CD8-positive, alpha-beta memory T cell (primary cell): ENCODE measurements at regions of chr16 and their contacts with region 1.

Region 1: DNA sequence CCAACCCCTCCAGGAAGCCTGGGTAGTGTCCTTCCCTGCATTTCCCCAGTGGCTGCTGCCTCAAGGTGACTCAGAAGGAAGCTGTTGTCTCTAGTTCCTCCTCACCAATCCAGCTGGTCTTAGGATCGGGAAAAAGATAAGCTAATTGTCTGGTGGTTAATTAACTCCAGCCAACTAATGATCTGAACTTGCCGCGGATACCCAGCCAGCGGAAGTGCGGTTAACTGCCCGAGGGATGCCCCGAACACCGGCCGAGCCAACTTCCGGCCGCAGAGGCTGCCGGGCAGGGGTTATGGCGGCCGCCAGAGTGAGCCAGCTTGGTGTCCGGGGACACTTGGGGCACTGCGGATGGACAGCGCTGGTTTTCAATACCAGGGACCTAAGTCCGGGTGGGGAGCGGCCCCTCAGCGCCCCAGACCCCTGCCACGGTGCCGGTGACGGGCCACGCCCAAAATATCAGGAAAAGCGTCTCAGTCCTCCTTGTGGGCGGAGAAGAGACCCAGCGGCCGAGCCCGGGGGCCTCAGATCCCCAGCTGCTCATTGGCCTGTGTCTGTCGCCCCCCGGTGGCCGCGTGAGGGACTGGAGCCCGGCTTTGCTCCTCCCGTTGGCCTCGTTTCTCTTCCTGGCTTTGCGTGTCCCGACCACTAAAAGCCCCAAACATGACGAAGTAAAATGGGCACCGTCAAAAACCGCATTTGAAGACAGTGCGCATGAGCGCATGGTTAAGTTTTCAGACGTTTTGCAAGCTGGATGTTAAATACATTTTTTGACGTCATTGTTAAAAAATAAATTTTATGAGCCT is 10.2 kb upstream of the PRSS22 start:
- DNase-seq: peak; percentile 93 to 96 (median 94)
- H3K4me3 ChIP-seq: peak overlapping the region; percentile 73
- H3K4me3 Mint-ChIP-seq: peak overlapping the region; percentile 73 to 93 (median 87)
- H3K27ac ChIP-seq: peak overlapping the region; percentile 79
- H3K27ac Mint-ChIP-seq: peak overlapping the region; percentile 75 to 96 (median 86)
- H3K4me1 ChIP-seq: peaks cover 13% of the 10 kb centered on the region
- H3K4me1 Mint-ChIP-seq: peaks cover 17 to 23% (median 20%) of the 10 kb centered on the region in 3 donors
- H3K27me3 ChIP-seq: no peaks in the 10 kb centered on the region
- H3K27me3 Mint-ChIP-seq: no peaks in the 10 kb centered on the region

Region 2: GRCh38 chr16:2728034-2728433 is 140.2 kb before region 1 on chr16:
- CTCF ChIA-PET with region 1: no interaction called
- POLR2A ChIA-PET with region 1: no interaction called
- DNase-seq: no peak
- H3K4me3 ChIP-seq: no peak overlapping the region
- H3K4me3 Mint-ChIP-seq: no peak overlapping the region
- H3K27ac ChIP-seq: no peak overlapping the region
- H3K27ac Mint-ChIP-seq: peak overlapping the region in 1 of 8 donors; percentile 65
- H3K4me1 ChIP-seq: no peaks in the 10 kb centered on the region
- H3K4me1 Mint-ChIP-seq: no peaks in the 10 kb centered on the region
- H3K27me3 ChIP-seq: no peaks in the 10 kb centered on the region
- H3K27me3 Mint-ChIP-seq: peaks cover 2 to 13% of the 10 kb centered on the region in 2 donors

Region 3: GRCh38 chr16:2838928-2839327 is 29.3 kb before region 1 on chr16:
- CTCF ChIA-PET with region 1: interaction called, 51 read pairs
- POLR2A ChIA-PET with region 1: no interaction called
- DNase-seq: peak; percentile 33 to 74 (median 55)
- H3K4me3 ChIP-seq: no peak overlapping the region
- H3K4me3 Mint-ChIP-seq: no peak overlapping the region
- H3K27ac ChIP-seq: no peak overlapping the region
- H3K27ac Mint-ChIP-seq: peak overlapping the region in 7 of 8 donors; percentile 20 to 88 (median 74)
- H3K4me1 ChIP-seq: peaks cover 42% of the 10 kb centered on the region
- H3K4me1 Mint-ChIP-seq: peaks cover 33 to 49% (median 38%) of the 10 kb centered on the region in 3 donors
- H3K27me3 ChIP-seq: no peaks in the 10 kb centered on the region
- H3K27me3 Mint-ChIP-seq: peaks cover 0 to 5% of the 10 kb centered on the region in 2 donors

Region 4: GRCh38 chr16:2857451-2858264 is 10.5 kb before region 1 on chr16 and contains the start of gene PRSS22:
- CTCF ChIA-PET with region 1: interaction called, 11 read pairs
- POLR2A ChIA-PET with region 1: no interaction called
- DNase-seq: peak in 1 of 5 donors; percentile 20
- H3K4me3 ChIP-seq: peak within 1 kb of the TSS; percentile 26
- H3K4me3 Mint-ChIP-seq: peak within 1 kb of the TSS; percentile 72 to 97 (median 89)
- H3K27ac ChIP-seq: no peak within 1 kb of the TSS
- H3K27ac Mint-ChIP-seq: peak within 1 kb of the TSS in 7 of 8 donors; percentile 49 to 96 (median 92)
- H3K4me1 ChIP-seq: peaks cover 16% of the 10 kb centered on the region
- H3K4me1 Mint-ChIP-seq: peaks cover 4 to 12% (median 5%) of the 10 kb centered on the region in 3 donors
- H3K27me3 ChIP-seq: no peaks in the 10 kb centered on the region
- H3K27me3 Mint-ChIP-seq: peaks cover 7 to 15% of the 10 kb centered on the region in 2 donors
- total RNA-seq, gene PRSS22: not detected

Region 5: GRCh38 chr16:2883027-2883851 is 15.1 kb after region 1 on chr16 and contains the start of gene FLYWCH2:
- CTCF ChIA-PET with region 1: interaction called, 35 read pairs
- POLR2A ChIA-PET with region 1: interaction called, 19 read pairs
- DNase-seq: peak; percentile 98 to 100 (median 100)
- H3K4me3 ChIP-seq: peak within 1 kb of the TSS; percentile 91
- H3K4me3 Mint-ChIP-seq: peak within 1 kb of the TSS; percentile 85 to 96 (median 93)
- H3K27ac ChIP-seq: peak within 1 kb of the TSS; percentile 88
- H3K27ac Mint-ChIP-seq: peak within 1 kb of the TSS; percentile 87 to 99 (median 97)
- H3K4me1 ChIP-seq: peaks cover 7% of the 10 kb centered on the region
- H3K4me1 Mint-ChIP-seq: peaks cover 11 to 21% (median 14%) of the 10 kb centered on the region in 3 donors
- H3K27me3 ChIP-seq: no peaks in the 10 kb centered on the region
- H3K27me3 Mint-ChIP-seq: no peaks in the 10 kb centered on the region
- total RNA-seq, gene FLYWCH2: 24.7 to 27.2 TPM

Region 6: DNA sequence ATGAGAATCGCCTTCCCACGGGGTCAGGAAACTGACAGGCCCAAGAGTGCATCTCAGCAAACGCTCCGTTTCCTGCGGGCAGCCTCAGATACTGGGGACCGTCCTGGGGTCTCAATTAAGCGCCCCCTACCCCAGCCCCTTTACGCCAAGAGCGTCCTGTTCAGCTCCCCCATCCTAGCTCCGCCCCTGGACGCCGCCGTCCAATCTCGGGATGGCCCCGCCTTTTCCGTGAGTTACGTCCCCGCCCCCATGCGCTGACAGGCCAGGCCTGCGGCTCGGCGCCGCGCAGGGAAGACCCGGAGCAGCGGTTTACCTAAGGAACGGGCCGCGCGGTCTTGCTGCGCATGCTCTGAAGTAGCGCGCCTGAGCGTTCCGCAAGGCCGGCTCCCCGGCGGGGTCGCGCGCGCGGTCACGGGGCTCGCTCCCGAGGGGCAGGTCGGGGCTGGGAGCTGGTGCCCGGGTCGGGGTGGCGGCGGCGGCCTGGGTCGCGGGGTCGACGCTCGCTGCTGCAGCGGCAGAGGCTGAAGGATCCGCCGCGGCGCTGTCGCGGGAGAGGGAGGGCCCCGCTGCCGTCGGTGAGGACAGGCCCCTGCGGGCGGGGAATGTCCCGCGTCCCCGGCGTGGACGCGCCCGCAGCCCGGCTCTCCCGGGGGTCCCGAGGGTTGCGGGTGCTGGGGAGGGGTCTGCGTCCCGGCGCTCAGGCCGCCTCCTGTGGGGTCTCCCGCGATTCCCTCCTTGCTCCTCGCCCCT is 43.6 kb after region 1 on chr16 and contains the start of gene FLYWCH1:
- CTCF ChIA-PET with region 1: interaction called, 11 read pairs
- POLR2A ChIA-PET with region 1: no interaction called
- DNase-seq: peak; percentile 96 to 98 (median 97)
- H3K4me3 ChIP-seq: peak within 1 kb of the TSS; percentile 96
- H3K4me3 Mint-ChIP-seq: peak within 1 kb of the TSS; percentile 87 to 96 (median 91)
- H3K27ac ChIP-seq: peak within 1 kb of the TSS; percentile 73
- H3K27ac Mint-ChIP-seq: peak within 1 kb of the TSS; percentile 84 to 95 (median 93)
- H3K4me1 ChIP-seq: peaks cover 16% of the 10 kb centered on the region
- H3K4me1 Mint-ChIP-seq: peaks cover 24 to 36% (median 28%) of the 10 kb centered on the region in 3 donors
- H3K27me3 ChIP-seq: no peaks in the 10 kb centered on the region
- H3K27me3 Mint-ChIP-seq: no peaks in the 10 kb centered on the region
- total RNA-seq, gene FLYWCH1: 37.2 to 39.8 TPM

Region 7: GRCh38 chr16:2919511-2920255 is 51.5 kb after region 1 on chr16:
- CTCF ChIA-PET with region 1: interaction called, 12 read pairs
- POLR2A ChIA-PET with region 1: no interaction called
- DNase-seq: peak in 4 of 5 donors; percentile 56 to 75 (median 62)
- H3K4me3 ChIP-seq: no peak overlapping the region
- H3K4me3 Mint-ChIP-seq: peak overlapping the region in 1 of 7 donors; percentile 11
- H3K27ac ChIP-seq: no peak overlapping the region
- H3K27ac Mint-ChIP-seq: peak overlapping the region in 5 of 8 donors; percentile 16 to 90 (median 87)
- H3K4me1 ChIP-seq: no peaks in the 10 kb centered on the region
- H3K4me1 Mint-ChIP-seq: peaks cover 3 to 6% (median 4%) of the 10 kb centered on the region in 3 donors
- H3K27me3 ChIP-seq: no peaks in the 10 kb centered on the region
- H3K27me3 Mint-ChIP-seq: peaks cover 0 to 1% of the 10 kb centered on the region in 2 donors

Region 8: GRCh38 chr16:2926650-2927646 is 58.8 kb after region 1 on chr16:
- CTCF ChIA-PET with region 1: interaction called, 11 read pairs
- POLR2A ChIA-PET with region 1: no interaction called
- DNase-seq: peak; percentile 75 to 92 (median 82)
- H3K4me3 ChIP-seq: no peak overlapping the region
- H3K4me3 Mint-ChIP-seq: peak overlapping the region in 5 of 7 donors; percentile 2 to 33 (median 20)
- H3K27ac ChIP-seq: no peak overlapping the region
- H3K27ac Mint-ChIP-seq: peak overlapping the region; percentile 0 to 73 (median 26)
- H3K4me1 ChIP-seq: peaks cover 8% of the 10 kb centered on the region
- H3K4me1 Mint-ChIP-seq: peaks cover 12 to 14% (median 14%) of the 10 kb centered on the region in 3 donors
- H3K27me3 ChIP-seq: no peaks in the 10 kb centered on the region
- H3K27me3 Mint-ChIP-seq: peaks cover 0 to under 1% of the 10 kb centered on the region in 2 donors

Region 9: GRCh38 chr16:2992383-2993055 is 124.3 kb after region 1 on chr16:
- CTCF ChIA-PET with region 1: no interaction called
- POLR2A ChIA-PET with region 1: no interaction called
- DNase-seq: no peak
- H3K4me3 ChIP-seq: no peak overlapping the region
- H3K4me3 Mint-ChIP-seq: no peak overlapping the region
- H3K27ac ChIP-seq: no peak overlapping the region
- H3K27ac Mint-ChIP-seq: no peak overlapping the region
- H3K4me1 ChIP-seq: no peaks in the 10 kb centered on the region
- H3K4me1 Mint-ChIP-seq: no peaks in the 10 kb centered on the region
- H3K27me3 ChIP-seq: no peaks in the 10 kb centered on the region
- H3K27me3 Mint-ChIP-seq: peaks cover 0 to 4% of the 10 kb centered on the region in 2 donors